ENCODE measurements at regions of chr14 and their contacts with region 1.

Region 1: DNA sequence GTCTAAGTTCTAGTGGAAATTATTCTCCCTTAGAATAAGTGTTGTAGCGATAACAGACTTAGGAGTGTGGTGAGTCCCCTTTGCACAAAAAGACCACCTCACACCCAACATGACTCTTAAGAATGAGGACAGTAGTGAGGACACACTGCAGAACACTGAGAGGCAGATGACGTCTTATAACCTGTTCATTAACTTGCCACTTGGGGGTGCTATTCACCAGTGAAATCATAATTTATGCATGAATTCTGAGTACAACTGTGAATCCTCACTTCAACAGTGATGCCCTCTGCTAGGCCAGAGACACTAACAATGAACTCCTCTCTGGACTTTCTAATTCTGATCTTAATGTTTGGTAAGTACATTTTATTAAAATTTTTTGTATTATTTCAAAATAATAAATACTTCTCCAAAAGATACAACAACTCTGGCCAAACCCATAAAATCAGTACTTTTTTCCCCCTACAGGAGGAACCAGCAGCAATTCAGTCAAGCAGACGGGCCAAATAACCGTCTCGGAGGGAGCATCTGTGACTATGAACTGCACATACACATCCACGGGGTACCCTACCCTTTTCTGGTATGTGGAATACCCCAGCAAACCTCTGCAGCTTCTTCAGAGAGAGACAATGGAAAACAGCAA is 274.7 kb downstream of the DAD1 start:
- DNase-seq: peak; percentile 68
- CTCF ChIP-seq: peak; percentile 71

Region 2: DNA sequence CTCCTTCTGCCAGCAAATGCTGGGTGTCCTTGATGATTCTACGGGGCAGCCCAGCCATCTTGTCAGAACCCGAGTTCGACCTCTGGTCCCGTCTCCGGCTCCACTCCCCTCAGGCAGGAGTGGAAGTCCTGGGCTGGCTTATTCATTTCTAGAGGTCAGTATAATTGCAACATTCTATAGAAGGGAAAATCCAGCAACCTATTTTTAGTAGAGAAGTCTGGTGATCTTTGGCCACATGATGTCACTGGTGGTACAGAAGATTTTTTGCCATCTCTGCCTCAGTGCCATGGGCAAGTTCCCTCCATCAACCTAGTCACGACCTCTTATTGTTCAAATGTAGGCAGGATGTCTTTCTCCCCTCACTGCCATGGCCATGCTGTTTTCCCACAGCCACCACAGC is 702.0 kb before region 1 on chr14:
- CTCF ChIA-PET with region 1: no interaction called
- POLR2A ChIA-PET with region 1: no interaction called
- DNase-seq: peak; percentile 22
- CTCF ChIP-seq: no peak

Region 3: GRCh38 chr14:22375321-22375930 is 61.1 kb after region 1 on chr14:
- CTCF ChIA-PET with region 1: interaction called, 135 read pairs
- POLR2A ChIA-PET with region 1: no interaction called
- DNase-seq: peak; percentile 24
- CTCF ChIP-seq: peak; percentile 60

Region 4: GRCh38 chr14:22380571-22381407 is 66.5 kb after region 1 on chr14:
- CTCF ChIA-PET with region 1: interaction called, 135 read pairs
- POLR2A ChIA-PET with region 1: no interaction called
- DNase-seq: no peak
- CTCF ChIP-seq: no peak

Measured in GM10248 (cell line).